ENCODE measurements at regions of chr6 and their contacts with region 1.

Region 1: DNA sequence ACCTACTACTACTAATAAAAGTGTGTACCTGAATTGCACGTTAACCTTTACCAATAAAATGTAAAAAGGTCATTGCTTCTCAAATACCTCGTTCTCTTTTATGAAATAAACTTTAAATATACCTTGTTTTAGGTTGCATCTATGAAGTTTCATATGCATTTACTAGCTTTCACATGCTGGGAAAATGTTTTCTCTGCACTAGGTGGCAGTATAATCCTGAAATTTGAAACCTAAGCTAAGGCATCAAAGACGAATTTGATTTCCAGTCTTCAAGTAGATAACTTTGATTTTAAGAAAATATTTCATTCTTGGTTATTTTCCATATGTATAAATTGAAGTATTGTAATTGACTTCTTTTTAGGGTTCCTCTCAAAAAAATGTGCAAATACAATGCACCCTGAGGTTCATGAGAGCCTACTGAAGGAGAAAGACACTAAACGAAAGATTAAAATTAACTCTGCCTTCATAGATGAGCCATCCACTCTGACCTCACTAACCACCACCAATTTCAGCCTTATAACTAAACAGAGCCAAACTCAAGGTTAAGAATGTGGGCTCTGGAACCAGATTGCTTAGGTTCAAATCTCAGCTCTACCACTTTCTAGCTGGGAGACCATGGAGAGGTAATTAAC is 7.3 kb upstream of the COL9A1 start:
- DNase-seq: peak; percentile 24
- H3K4me3 ChIP-seq: no peak overlapping the region
- H3K27ac ChIP-seq: no peak overlapping the region
- H3K4me1 ChIP-seq: no peaks in the 10 kb centered on the region
- H3K27me3 ChIP-seq: no peaks in the 10 kb centered on the region
- CTCF ChIP-seq: peak; percentile 47

Region 2: DNA sequence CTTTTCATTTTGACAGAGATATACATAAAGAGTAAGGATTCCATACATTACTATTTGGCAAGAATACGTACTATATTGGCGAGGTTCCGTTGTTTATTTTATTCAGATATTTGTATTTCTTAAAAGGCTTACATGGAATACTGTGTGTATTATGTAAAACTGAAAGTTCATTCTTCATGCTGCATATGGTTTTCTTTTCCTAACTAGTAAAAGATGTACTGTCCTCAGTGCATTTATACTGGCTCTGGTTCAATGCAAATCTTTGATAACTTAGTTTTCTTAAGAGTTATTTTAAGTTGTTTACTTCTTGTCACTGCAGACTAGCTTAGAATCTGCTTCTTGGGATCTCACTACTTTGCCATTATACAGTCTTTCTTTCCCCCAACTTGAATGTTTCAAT is 1633.1 kb before region 1 on chr6:
- intact Hi-C with region 1: no loop called
- DNase-seq: no peak
- H3K4me3 ChIP-seq: no peak overlapping the region
- H3K27ac ChIP-seq: no peak overlapping the region
- H3K4me1 ChIP-seq: no peaks in the 10 kb centered on the region
- H3K27me3 ChIP-seq: no peaks in the 10 kb centered on the region
- CTCF ChIP-seq: no peak

Region 3: GRCh38 chr6:70369332-70369950 is 59.3 kb after region 1 on chr6:
- intact Hi-C with region 1: loop called (anchors 5 kb)
- DNase-seq: peak; percentile 76
- H3K4me3 ChIP-seq: no peak overlapping the region
- H3K27ac ChIP-seq: no peak overlapping the region
- H3K4me1 ChIP-seq: no peaks in the 10 kb centered on the region
- H3K27me3 ChIP-seq: no peaks in the 10 kb centered on the region
- CTCF ChIP-seq: peak; percentile 90

Region 4: DNA sequence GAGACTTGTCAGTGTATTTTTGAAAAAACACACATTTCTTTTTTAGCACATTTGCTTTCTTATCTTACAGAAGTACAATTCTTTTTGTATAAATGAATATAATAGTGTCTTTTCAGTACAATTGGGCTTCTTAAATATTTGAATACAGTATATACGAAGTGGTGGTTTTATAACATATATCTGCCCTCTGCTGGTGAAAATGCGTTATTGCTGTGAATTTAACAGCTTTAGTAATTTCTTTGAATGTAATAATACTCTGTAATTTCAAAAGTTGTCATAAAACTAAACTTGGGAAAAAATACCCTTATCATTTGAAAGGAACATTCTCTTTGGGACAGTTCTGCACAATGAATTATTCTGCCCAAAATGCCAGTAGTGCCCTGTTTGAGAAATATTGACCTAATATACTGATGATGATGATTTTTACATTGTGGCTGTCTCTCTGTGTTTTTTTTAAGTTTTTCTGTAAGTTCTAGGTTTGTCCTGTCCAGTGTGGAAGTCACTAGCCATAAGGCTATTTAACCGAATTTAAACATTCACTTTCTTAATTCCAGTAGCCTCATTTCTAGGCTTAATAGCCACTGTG is 376.5 kb after region 1 on chr6:
- intact Hi-C with region 1: loop called (anchors 5 kb)
- DNase-seq: no peak
- H3K4me3 ChIP-seq: no peak overlapping the region
- H3K27ac ChIP-seq: no peak overlapping the region
- H3K4me1 ChIP-seq: no peaks in the 10 kb centered on the region
- H3K27me3 ChIP-seq: no peaks in the 10 kb centered on the region
- CTCF ChIP-seq: peak; percentile 68

Measured in colonic mucosa (tissue), 4 donors.